Activated naive CD4-positive, alpha-beta T cell treated with anti-CD3 and anti-CD28 coated beads for 36 hours (primary cell): ENCODE measurements at regions of chr7 and their contacts with region 1.

Region 1: DNA sequence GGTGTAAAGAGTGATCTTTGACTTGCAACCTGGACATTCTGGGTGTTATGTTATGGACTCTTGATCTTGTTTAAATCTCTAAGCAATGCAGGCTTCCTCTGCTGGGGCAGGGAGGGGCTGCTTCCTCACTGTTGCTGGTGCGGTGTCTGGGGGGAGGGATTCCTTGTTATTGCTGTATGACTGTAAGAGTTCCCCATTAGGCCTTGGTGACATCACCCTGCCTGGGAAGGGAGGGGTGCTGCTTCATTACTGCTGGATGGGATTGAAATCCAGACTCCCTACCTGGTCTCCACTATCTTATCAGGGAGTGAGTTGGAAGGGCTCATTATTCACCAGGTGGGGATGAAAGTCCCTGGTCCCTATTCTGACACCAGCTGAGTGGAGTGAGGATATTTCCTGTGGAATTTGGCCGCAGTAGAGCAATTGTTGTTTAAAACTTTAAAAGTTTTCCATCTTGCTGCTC is 8.8 kb downstream of the OGDH start:
- DNase-seq: peak; percentile 57
- H3K4me3 Mint-ChIP-seq: no peak overlapping the region
- H3K27ac Mint-ChIP-seq: peak overlapping the region; percentile 25
- H3K4me1 Mint-ChIP-seq: peaks cover 60% of the 10 kb centered on the region
- H3K27me3 Mint-ChIP-seq: no peaks in the 10 kb centered on the region

Region 2: DNA sequence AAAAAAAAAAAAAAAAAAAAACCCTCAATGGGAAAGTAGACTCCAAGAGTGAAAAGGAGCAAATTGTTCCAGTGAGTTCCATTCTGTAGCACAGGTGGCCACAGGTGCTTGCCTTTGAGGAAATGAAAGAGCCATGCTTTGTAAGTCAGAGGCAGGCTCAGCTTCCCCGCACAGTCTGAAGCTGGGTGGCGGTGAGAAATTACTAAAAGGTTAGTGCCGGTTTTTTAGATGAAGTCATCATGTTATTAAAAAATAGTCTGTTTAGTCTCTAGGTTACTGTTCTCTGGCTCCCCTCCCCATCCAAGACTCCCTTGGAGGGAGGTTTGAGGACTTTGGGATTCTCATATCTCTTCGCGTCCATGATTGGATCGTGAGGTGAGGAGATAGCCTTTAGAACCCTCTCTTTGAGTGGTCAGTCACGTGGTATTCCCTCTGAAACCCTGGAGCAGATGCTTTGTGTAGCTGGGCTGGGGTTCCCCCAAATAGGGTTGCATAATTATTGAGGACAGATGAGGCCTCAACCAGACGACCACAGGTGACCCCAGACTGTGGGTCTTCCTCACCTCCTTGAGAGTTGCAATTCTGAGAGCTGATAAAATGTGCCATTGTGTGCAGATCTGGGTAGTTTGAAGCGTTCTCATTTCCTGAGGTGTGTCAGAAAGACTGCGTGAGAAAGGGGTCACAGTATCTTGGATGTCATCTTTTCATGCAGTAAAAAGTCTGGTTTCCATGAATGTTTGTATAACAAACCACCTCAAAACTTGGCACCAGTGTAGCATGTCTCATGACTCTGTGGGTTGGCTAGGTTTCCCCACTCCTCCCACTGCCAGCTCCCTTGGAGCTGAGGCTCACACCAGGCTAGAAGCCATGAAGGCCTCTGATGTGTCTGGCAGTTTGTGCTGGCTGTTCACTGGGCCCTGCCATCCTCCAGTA is 18.3 kb after region 1 on chr7:
- CTCF ChIA-PET with region 1: interaction called, 52 read pairs
- intact Hi-C with region 1: loop called (anchors 1 kb)
- DNase-seq: peak; percentile 63
- H3K4me3 Mint-ChIP-seq: no peak overlapping the region
- H3K27ac Mint-ChIP-seq: peak overlapping the region; percentile 80
- H3K4me1 Mint-ChIP-seq: peaks cover 77% of the 10 kb centered on the region
- H3K27me3 Mint-ChIP-seq: no peaks in the 10 kb centered on the region

Region 3: DNA sequence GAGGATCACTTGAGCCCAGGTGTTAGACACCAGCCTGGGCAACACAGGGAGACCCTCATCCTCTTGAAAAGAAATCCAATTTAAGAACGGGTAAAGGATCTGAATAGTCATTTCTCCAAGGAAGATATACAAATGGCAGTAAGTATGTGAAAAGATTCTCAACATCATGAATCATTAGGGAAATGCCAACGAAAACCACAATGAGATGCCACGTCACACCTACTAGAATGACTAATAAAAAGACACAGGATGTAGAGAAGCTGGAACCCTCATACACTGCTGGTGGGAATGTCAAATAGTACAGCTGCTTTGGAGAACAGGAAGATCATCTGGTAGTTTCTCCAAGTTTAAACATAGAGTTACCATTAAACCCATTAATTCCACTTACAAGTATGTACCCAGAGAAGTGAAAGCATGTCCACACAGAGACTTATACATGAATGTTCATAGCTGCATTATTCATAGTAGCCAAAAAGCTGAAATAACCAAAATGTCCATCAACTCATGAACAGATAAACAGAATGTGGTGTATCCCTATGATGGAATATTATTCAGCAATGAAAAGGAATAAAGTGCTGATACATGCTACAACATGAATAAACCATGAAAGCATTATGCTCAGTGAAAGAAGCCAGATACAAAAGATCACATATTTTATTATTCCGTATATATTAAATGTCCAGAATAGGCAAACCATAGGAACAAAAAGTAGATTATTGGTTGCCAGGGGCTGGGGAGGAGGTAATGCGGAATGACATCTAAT is 120.4 kb after region 1 on chr7:
- CTCF ChIA-PET with region 1: no interaction called
- intact Hi-C with region 1: loop called (anchors 1 kb)
- DNase-seq: peak; percentile 83
- H3K4me3 Mint-ChIP-seq: no peak overlapping the region
- H3K27ac Mint-ChIP-seq: peak overlapping the region; percentile 79
- H3K4me1 Mint-ChIP-seq: peaks cover 31% of the 10 kb centered on the region
- H3K27me3 Mint-ChIP-seq: no peaks in the 10 kb centered on the region

Region 4: GRCh38 chr7:44748045-44748947 is 133.1 kb after region 1 on chr7 and contains the start of gene ZMIZ2:
- CTCF ChIA-PET with region 1: no interaction called
- intact Hi-C with region 1: loop called (anchors 1 kb)
- DNase-seq: peak; percentile 92
- H3K4me3 Mint-ChIP-seq: peak within 1 kb of the TSS; percentile 82
- H3K27ac Mint-ChIP-seq: peak within 1 kb of the TSS; percentile 88
- H3K4me1 Mint-ChIP-seq: peaks cover 39% of the 10 kb centered on the region
- H3K27me3 Mint-ChIP-seq: no peaks in the 10 kb centered on the region
- total RNA-seq, gene ZMIZ2: 83.1 to 86.5 TPM

Region 5: DNA sequence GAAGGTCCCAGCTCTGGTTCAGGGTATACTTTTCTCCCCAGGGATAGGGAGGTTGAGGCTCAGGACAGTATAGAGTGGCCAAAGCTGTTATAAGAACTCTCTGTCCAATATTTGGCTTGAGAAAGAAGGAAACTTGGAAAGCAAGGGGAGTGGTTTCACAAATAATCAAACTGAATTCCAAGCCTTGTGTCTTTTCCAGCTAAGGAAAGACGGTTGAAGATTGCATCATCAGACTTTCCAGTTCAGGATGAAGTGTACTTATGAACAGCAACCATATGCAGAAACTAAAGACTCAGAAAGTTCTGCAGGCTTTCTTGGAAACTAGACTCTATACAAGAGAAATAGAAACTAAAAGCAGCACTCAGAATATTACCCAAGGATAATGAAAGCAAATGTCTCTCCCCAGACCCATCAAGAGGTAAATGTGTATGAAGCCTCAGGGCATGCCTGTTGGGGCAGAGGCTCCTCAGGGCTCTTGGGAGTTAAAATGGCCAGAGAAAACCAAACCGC is 588.8 kb after region 1 on chr7:
- CTCF ChIA-PET with region 1: no interaction called
- intact Hi-C with region 1: loop called (anchors 5 kb)
- DNase-seq: peak; percentile 28
- H3K4me3 Mint-ChIP-seq: peak overlapping the region; percentile 10
- H3K27ac Mint-ChIP-seq: peak overlapping the region; percentile 79
- H3K4me1 Mint-ChIP-seq: peaks cover 35% of the 10 kb centered on the region
- H3K27me3 Mint-ChIP-seq: no peaks in the 10 kb centered on the region